ENCODE measurements at regions of chr12 and their contacts with region 1.

Region 1: DNA sequence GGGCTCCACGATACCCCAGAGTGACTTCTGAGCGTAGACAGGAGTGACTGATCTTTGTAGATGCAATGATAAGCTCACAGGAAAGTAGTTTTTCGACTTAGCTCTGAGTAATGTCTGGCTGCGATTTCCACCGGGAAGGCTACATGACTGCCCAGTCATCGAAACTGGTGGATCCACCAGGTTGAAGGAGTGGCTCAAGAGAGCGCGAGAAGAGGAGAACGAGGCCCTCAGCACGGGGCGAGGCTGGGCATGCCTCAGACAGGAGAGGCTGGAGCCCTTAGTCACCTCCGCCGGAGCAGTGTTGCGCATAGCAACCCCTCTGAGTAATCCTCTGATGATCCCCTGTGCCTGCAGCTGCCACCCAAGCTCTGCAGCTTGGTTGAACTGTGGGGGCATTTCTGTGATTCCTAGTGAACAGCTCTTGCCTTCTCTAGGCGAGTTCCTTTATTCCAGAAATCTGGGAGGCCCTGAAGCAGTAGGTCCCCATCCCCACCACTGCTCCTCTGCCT is 25.6 kb downstream of the ELK3 start:
- DNase-seq: no peak
- ATAC-seq: no peak; the same call in 1 of the 3 replicates
- H3K4me3 ChIP-seq: no peak overlapping the region
- H3K27ac ChIP-seq: no peak overlapping the region
- H3K4me1 ChIP-seq: no peaks in the 10 kb centered on the region
- H3K27me3 ChIP-seq: 0 out of 5 replicates have a peak, but pooled peaks cover 0 to 3% of the 10 kb centered on the region in 2 experiments
- CTCF ChIP-seq: no peak
- EP300 ChIP-seq: no peak
- POLR2A ChIP-seq: no peak
- RAD21 ChIP-seq: no peak

Region 2: DNA sequence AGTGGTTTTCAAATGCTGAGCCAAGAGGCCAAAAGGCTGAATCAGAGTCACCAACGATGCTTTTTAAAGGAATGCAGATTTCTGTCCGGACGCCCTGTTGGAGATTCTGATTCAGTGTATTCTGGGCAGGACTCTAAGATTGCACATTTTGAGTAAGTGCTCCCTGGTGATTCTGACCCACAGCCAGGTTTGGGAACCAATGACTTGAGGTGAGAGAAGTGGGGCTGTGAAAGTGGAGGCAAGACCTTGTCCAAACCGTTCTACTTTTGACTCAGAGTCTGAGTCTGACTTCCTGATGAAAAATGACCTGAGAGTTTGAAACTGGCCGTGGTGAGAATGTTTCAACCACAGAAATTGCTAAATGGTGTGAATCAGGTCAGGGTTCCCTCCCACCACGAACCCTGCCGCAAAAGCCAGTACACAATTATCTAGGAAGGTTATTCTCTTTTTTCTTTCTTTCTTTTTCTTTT is 519.4 kb before region 1 on chr12:
- CTCF ChIA-PET with region 1: no interaction called
- POLR2A ChIA-PET with region 1: no interaction called
- in situ Hi-C with region 1: no loop called
- intact Hi-C with region 1: no loop called
- DNase-seq: no peak
- ATAC-seq: no peak
- H3K4me3 ChIP-seq: no peak overlapping the region
- H3K27ac ChIP-seq: no peak overlapping the region
- H3K4me1 ChIP-seq: no peaks in the 10 kb centered on the region
- H3K27me3 ChIP-seq: no peaks in the 10 kb centered on the region
- CTCF ChIP-seq: no peak
- EP300 ChIP-seq: no peak
- POLR2A ChIP-seq: no peak
- RAD21 ChIP-seq: no peak

Region 3: DNA sequence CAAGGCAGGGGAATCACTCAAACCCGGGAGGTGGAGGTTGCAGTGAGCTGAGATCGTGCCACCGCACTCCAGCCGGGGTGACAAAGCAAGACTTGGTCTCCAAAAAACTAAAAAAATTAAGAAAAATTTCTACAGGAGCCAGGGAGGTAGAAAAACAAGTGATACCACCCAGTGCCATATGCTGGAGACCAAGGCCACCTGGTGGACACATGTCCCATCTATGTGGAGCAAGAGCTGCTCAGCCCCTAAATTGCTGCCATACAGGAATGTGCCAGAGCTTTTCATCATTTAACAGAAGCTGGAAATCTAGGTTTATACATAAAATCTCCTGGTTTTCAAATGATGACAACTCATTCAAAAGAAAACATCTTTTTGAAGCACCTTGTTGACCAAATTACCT is 86.9 kb before region 1 on chr12:
- CTCF ChIA-PET with region 1: no interaction called
- POLR2A ChIA-PET with region 1: no interaction called
- in situ Hi-C with region 1: no loop called
- intact Hi-C with region 1: loop called (anchors 2 kb)
- DNase-seq: peak in 2 of 4 experiments; percentile 21 to 22
- ATAC-seq: peak; percentile 75
- H3K4me3 ChIP-seq: no peak overlapping the region
- H3K27ac ChIP-seq: no peak overlapping the region
- H3K4me1 ChIP-seq: 0 out of 5 replicates have a peak, but pooled peaks cover 0 to 6% of the 10 kb centered on the region in 2 experiments
- H3K27me3 ChIP-seq: peaks cover 19 to 31% of the 10 kb centered on the region in 2 experiments; a peak in 4 of 5 replicates
- CTCF ChIP-seq: peak; percentile 15 to 54 (median 22); a peak in 2 of 6 replicates
- EP300 ChIP-seq: no peak
- POLR2A ChIP-seq: no peak
- RAD21 ChIP-seq: peak; percentile 53 to 71

Region 4: DNA sequence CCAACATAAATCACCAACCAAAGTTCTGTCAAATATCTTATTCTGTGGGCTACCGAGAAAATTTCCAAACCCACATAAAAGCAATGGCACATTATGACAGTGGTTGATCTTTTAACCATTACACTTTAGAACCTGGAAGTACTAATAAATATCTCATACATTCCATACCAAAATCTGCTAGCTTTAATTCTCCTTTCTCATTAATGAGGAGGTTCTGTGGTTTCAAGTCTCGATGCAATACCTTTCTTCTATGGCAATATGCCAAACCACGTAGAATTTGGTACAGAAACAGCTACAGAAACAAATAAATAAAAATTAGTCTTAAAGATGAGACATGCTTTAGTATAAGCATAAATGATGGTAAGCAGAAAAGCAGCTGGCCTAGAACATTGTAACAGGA is 75.1 kb after region 1 on chr12:
- CTCF ChIA-PET with region 1: no interaction called
- POLR2A ChIA-PET with region 1: no interaction called
- in situ Hi-C with region 1: no loop called
- intact Hi-C with region 1: no loop called
- DNase-seq: no peak
- ATAC-seq: no peak
- H3K4me3 ChIP-seq: no peak overlapping the region
- H3K27ac ChIP-seq: no peak overlapping the region
- H3K4me1 ChIP-seq: no peaks in the 10 kb centered on the region
- H3K27me3 ChIP-seq: no peaks in the 10 kb centered on the region
- CTCF ChIP-seq: no peak
- EP300 ChIP-seq: no peak
- POLR2A ChIP-seq: no peak
- RAD21 ChIP-seq: no peak